ENCODE measurements at regions of chr7 and their contacts with region 1.

Region 1: GRCh38 chr7:16420649-16421332 is 547 bp downstream of the CRPPA start:
- DNase-seq: peak; percentile 71 to 93 (median 88)
- ATAC-seq: peak; percentile 93
- H3K4me3 ChIP-seq: peak overlapping the region; percentile 93
- H3K4me3 Mint-ChIP-seq: peak overlapping the region; percentile 82 to 96 (median 88)
- H3K27ac ChIP-seq: peak overlapping the region; percentile 78
- H3K27ac Mint-ChIP-seq: peak overlapping the region; percentile 84 to 98 (median 92)
- H3K4me1 ChIP-seq: peaks cover 6 to 9% of the 10 kb centered on the region in 2 donors
- H3K4me1 Mint-ChIP-seq: peaks cover 7 to 23% (median 15%) of the 10 kb centered on the region in 7 donors
- H3K27me3 ChIP-seq: no peaks in the 10 kb centered on the region
- H3K27me3 Mint-ChIP-seq: peaks cover 0 to 14% (median 0%) of the 10 kb centered on the region in 5 donors

Region 2: DNA sequence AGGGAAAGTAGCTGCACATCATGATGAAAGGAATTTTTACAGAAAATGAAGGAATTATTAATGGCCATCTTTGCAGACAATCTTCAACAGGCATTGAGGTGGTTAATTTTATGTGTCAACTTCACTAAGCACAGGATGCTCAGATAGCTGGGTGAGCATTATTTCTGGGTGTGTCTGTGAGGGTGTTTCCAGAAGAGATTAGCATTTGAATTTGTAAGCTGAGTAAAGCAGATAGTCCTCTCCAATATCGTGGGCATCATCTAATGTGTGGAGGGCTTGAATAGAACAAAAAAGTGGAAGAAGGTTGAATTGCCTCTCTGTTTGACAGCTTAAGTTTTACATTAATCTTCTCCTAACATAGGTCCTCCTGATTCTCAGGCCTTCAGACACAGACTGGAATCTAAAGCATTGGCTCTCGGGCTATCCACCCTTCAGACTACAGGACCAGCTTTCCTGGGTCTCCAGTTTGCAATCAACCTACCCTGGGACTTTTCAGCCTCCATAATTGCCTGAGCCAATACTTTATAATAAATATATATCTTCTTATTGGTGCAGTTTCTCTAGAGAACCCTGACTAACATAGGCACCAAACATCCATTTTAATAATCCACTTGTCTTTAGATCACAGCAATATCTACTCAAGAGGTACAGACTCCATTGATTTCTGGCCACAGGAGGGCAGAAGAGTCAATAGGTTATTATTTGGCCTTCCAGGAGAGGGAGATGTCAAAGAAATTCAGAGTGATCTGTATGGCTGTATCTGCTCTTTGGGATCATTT is 11.0 kb after region 1 on chr7:
- CTCF ChIA-PET with region 1: interaction called, 5 read pairs
- POLR2A ChIA-PET with region 1: interaction called, 16 read pairs
- intact Hi-C with region 1: loop called (anchors 1 kb)
- DNase-seq: peak in 7 of 9 donors; percentile 20 to 50 (median 31)
- ATAC-seq: peak; percentile 81
- H3K4me3 ChIP-seq: no peak overlapping the region
- H3K4me3 Mint-ChIP-seq: no peak overlapping the region
- H3K27ac ChIP-seq: no peak overlapping the region
- H3K27ac Mint-ChIP-seq: no peak overlapping the region
- H3K4me1 ChIP-seq: no peaks in the 10 kb centered on the region
- H3K4me1 Mint-ChIP-seq: peaks cover 0 to 6% (median 0%) of the 10 kb centered on the region in 7 donors
- H3K27me3 ChIP-seq: no peaks in the 10 kb centered on the region
- H3K27me3 Mint-ChIP-seq: peaks cover 0 to 16% (median 3%) of the 10 kb centered on the region in 5 donors

Region 3: DNA sequence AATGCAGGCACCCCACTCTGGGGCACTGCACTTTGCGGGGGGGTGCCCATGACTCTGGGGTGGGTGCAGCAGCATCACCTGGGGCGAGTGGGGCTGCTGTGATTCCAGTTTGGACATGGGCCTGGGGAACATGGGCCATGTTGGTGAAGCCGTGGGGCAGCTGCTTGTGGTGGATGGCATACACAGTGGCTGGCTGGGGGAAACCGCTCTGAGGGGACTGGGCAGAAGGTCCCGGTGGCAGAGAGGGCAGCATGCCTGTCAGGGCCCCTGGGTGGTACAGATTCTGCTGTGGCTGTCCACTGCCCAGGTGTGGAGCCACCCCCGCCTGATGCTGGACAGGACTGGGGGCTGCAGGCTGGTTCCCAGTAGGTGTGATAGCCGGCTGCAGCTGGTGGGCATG is 163.0 kb after region 1 on chr7:
- CTCF ChIA-PET with region 1: no interaction called
- POLR2A ChIA-PET with region 1: no interaction called
- intact Hi-C with region 1: no loop called
- DNase-seq: no peak
- ATAC-seq: no peak
- H3K4me3 ChIP-seq: no peak overlapping the region
- H3K4me3 Mint-ChIP-seq: no peak overlapping the region
- H3K27ac ChIP-seq: no peak overlapping the region
- H3K27ac Mint-ChIP-seq: no peak overlapping the region
- H3K4me1 ChIP-seq: no peaks in the 10 kb centered on the region
- H3K4me1 Mint-ChIP-seq: peaks cover 0 to 3% (median 0%) of the 10 kb centered on the region in 7 donors
- H3K27me3 ChIP-seq: no peaks in the 10 kb centered on the region
- H3K27me3 Mint-ChIP-seq: peaks cover 0 to 10% (median 2%) of the 10 kb centered on the region in 5 donors

Region 4: GRCh38 chr7:16609842-16610450 is 189.2 kb after region 1 on chr7:
- CTCF ChIA-PET with region 1: no interaction called
- POLR2A ChIA-PET with region 1: no interaction called
- intact Hi-C with region 1: no loop called
- DNase-seq: no peak
- ATAC-seq: peak; percentile 46
- H3K4me3 ChIP-seq: no peak overlapping the region
- H3K4me3 Mint-ChIP-seq: no peak overlapping the region
- H3K27ac ChIP-seq: no peak overlapping the region
- H3K27ac Mint-ChIP-seq: no peak overlapping the region
- H3K4me1 ChIP-seq: no peaks in the 10 kb centered on the region
- H3K4me1 Mint-ChIP-seq: peaks cover 0 to 6% (median 0%) of the 10 kb centered on the region in 7 donors
- H3K27me3 ChIP-seq: no peaks in the 10 kb centered on the region
- H3K27me3 Mint-ChIP-seq: no peaks in the 10 kb centered on the region

Region 5: DNA sequence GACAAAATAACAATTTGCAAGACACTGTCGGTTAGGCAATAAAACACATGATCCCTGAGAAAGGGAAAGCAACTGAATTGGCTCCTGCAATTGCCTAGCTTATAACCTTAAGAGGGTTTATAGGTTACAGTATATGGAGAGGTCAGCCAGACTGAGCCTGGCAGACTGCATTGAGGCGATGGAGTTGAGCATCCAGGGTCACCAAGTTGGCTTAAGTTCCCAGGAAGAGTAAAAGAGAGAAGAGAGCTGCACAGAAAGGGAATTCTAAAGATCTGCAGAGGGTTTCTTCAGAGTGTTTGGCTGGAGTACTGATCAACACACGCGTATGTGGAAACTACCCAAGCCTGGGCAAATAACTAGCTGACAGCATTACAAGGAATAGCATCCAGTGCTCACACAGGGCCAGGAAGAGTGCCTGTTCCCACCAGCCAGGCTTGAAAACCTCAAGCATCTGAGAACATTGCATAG is 213.5 kb after region 1 on chr7:
- CTCF ChIA-PET with region 1: no interaction called
- POLR2A ChIA-PET with region 1: no interaction called
- intact Hi-C with region 1: no loop called
- DNase-seq: no peak
- ATAC-seq: no peak
- H3K4me3 ChIP-seq: no peak overlapping the region
- H3K4me3 Mint-ChIP-seq: no peak overlapping the region
- H3K27ac ChIP-seq: no peak overlapping the region
- H3K27ac Mint-ChIP-seq: no peak overlapping the region
- H3K4me1 ChIP-seq: no peaks in the 10 kb centered on the region
- H3K4me1 Mint-ChIP-seq: peaks cover 0 to 13% (median 3%) of the 10 kb centered on the region in 7 donors
- H3K27me3 ChIP-seq: no peaks in the 10 kb centered on the region
- H3K27me3 Mint-ChIP-seq: no peaks in the 10 kb centered on the region

Region 6: DNA sequence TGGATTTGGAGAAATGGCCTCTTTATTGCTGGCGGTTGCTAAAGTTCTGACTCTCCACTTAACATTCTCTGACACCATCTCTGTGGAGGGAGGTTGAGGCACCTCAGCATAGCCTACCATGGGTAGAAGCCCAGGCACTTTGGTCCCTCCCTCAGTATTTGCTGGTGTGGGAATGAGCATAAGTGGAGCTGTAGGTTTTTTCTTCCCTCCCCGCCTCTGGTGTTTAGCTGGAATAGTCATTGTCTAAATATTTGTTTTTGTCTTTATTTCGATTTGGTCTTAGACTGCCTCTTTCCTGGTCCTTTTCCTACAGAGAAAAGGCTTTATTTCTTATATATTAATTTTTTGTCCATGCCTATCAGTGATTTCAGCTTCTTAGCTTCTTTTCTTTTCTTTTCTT is 664.4 kb after region 1 on chr7:
- CTCF ChIA-PET with region 1: no interaction called
- POLR2A ChIA-PET with region 1: no interaction called
- intact Hi-C with region 1: no loop called
- DNase-seq: no peak
- ATAC-seq: no peak
- H3K4me3 ChIP-seq: no peak overlapping the region
- H3K4me3 Mint-ChIP-seq: no peak overlapping the region
- H3K27ac ChIP-seq: no peak overlapping the region
- H3K27ac Mint-ChIP-seq: no peak overlapping the region
- H3K4me1 ChIP-seq: no peaks in the 10 kb centered on the region
- H3K4me1 Mint-ChIP-seq: peaks cover 0 to 3% (median 0%) of the 10 kb centered on the region in 7 donors
- H3K27me3 ChIP-seq: no peaks in the 10 kb centered on the region
- H3K27me3 Mint-ChIP-seq: peaks cover 0 to 14% (median 8%) of the 10 kb centered on the region in 5 donors

Measured in naive thymus-derived CD4-positive, alpha-beta T cell (primary cell).